GM23248 (cell line): ENCODE measurements at regions of chr3 and their contacts with region 1.

Region 1: DNA sequence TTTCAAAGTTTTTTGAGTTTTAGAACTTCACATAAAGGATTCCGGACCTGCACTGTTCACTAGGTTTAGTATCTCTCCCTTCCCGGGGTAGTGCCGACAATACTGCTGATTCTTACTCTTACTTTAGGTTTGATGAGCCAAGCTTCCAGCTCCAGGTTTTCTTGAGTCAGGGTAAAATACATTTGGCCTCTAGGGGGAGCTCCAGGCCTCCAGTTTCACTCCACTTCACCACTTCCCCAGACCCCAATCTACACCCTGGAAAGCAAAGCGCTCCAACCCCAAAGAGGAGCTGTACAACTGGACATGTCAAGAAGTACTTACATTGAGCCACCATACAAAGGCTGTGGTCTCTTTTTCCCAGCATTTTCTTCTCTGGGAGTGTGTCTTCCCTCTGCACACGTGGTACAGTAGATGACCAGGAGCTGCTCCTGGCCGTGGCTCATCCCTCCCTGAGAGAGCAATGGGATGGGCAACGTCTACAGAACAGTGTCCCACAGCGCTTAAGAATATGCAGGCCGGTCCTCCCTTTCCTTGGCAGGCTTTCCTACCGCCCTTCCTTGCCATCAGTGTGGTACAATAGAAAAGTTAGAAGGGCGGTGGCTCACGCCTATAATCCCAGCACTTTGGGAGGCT is 93.9 kb upstream of the CCDC80 start:
- DNase-seq: peak; percentile 74
- H3K4me3 ChIP-seq: no peak overlapping the region
- H3K27ac ChIP-seq: no peak overlapping the region
- H3K4me1 ChIP-seq: peaks cover 36% of the 10 kb centered on the region
- H3K27me3 ChIP-seq: no peaks in the 10 kb centered on the region

Region 2: GRCh38 chr3:112979240-112979832 is 244.5 kb after region 1 on chr3:
- in situ Hi-C with region 1: loop called (anchors 10 kb)
- DNase-seq: peak; percentile 65
- H3K4me3 ChIP-seq: no peak overlapping the region
- H3K27ac ChIP-seq: no peak overlapping the region
- H3K4me1 ChIP-seq: no peaks in the 10 kb centered on the region
- H3K27me3 ChIP-seq: no peaks in the 10 kb centered on the region

Region 3: GRCh38 chr3:113291572-113291971 is 556.7 kb after region 1 on chr3:
- in situ Hi-C with region 1: no loop called
- DNase-seq: no peak
- H3K4me3 ChIP-seq: no peak overlapping the region
- H3K27ac ChIP-seq: no peak overlapping the region
- H3K4me1 ChIP-seq: peaks cover 15% of the 10 kb centered on the region
- H3K27me3 ChIP-seq: no peaks in the 10 kb centered on the region